Kidney (tissue), 22 donors: ENCODE measurements at regions of chr17 and their contacts with region 1.

Region 1: GRCh38 chr17:7989781-7990655 is 12.4 kb upstream of the GUCY2D start:
- DNase-seq: peak; percentile 89 to 91 (median 90)
- H3K4me3 ChIP-seq: peak overlapping the region in 1 of 3 donors; percentile 64
- H3K27ac ChIP-seq: no peak overlapping the region
- H3K4me1 ChIP-seq: peaks cover 0 to 3% (median 0%) of the 10 kb centered on the region in 3 donors
- H3K27me3 ChIP-seq: no peaks in the 10 kb centered on the region
- CTCF ChIP-seq: peak; percentile 89

Region 2: GRCh38 chr17:7862692-7863437 is 127.2 kb before region 1 on chr17:
- intact Hi-C with region 1: loop called (anchors 5 kb)
- DNase-seq: peak in 4 of 5 donors; percentile 62 to 88 (median 72)
- H3K4me3 ChIP-seq: no peak overlapping the region
- H3K27ac ChIP-seq: no peak overlapping the region
- H3K4me1 ChIP-seq: peaks cover 0 to 9% (median 4%) of the 10 kb centered on the region in 3 donors
- H3K27me3 ChIP-seq: no peaks in the 10 kb centered on the region
- CTCF ChIP-seq: peak; percentile 81

Region 3: DNA sequence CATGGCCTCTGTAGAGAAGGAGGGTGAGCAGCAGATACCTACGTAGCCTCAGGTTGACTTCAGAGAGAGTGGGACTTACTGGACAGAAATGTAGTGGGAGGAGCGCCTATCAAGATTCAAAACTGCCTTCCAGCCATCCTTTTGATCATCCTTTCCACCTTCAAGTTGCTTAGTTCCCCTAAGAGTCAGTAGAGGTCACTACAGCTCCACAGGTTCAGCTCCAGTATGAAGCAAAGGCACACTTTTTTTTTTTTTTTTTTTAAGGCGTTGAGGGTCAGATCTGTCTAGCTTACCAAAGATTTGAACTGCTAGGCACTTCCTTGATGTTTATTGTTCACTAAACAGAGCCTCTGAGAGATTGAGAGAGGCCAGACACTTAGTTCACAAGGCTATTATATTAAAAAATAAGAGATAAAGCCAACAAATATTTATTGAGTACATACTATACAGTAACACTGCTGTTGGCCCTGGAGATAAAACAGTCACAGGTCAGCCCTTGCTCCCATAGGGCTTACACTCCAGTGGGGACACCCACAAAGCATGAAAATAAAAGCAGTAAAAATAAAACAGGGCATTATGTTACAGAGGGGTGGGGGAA is 77.0 kb before region 1 on chr17:
- intact Hi-C with region 1: loop called (anchors 5 kb)
- DNase-seq: peak in 3 of 5 donors; percentile 50 to 88 (median 82)
- H3K4me3 ChIP-seq: no peak overlapping the region
- H3K27ac ChIP-seq: no peak overlapping the region
- H3K4me1 ChIP-seq: peaks cover 0 to 15% (median 7%) of the 10 kb centered on the region in 3 donors
- H3K27me3 ChIP-seq: no peaks in the 10 kb centered on the region
- CTCF ChIP-seq: peak; percentile 69

Region 4: GRCh38 chr17:8156246-8156992 is 166.4 kb after region 1 on chr17:
- intact Hi-C with region 1: no loop called
- DNase-seq: peak; percentile 100
- H3K4me3 ChIP-seq: peak overlapping the region; percentile 75 to 99 (median 99)
- H3K27ac ChIP-seq: peak overlapping the region; percentile 99 to 100
- H3K4me1 ChIP-seq: peaks cover 5 to 32% (median 22%) of the 10 kb centered on the region in 3 donors
- H3K27me3 ChIP-seq: no peaks in the 10 kb centered on the region
- CTCF ChIP-seq: peak; percentile 13